Activated CD8-positive, alpha-beta T cell treated with anti-CD3 and anti-CD28 coated beads, Interleukin-2, amount 10 ng/mL, durations not matched to agents 7 days and 5 days (primary cell): ENCODE measurements at regions of chr19 and their contacts with region 1.

Region 1: GRCh38 chr19:13150187-13150930 is at the starts of genes IER2 and STX10:
- DNase-seq: peak; percentile 95
- ATAC-seq: peak; percentile 42
- H3K4me3 Mint-ChIP-seq: peak within 1 kb of the TSS; percentile 99
- H3K27ac Mint-ChIP-seq: peak within 1 kb of the TSS; percentile 99
- H3K4me1 Mint-ChIP-seq: peaks cover 20% of the 10 kb centered on the region
- H3K27me3 Mint-ChIP-seq: peaks cover 2% of the 10 kb centered on the region
- total RNA-seq, gene IER2: 203 to 210 TPM
- total RNA-seq, gene STX10: 68.4 to 69.2 TPM

Region 2: GRCh38 chr19:13104360-13104847 is 46.0 kb before region 1 on chr19:
- CTCF ChIA-PET with region 1: interaction called, 8 read pairs
- POLR2A ChIA-PET with region 1: interaction called, 21 read pairs
- DNase-seq: peak; percentile 75
- ATAC-seq: peak; percentile 55
- H3K4me3 Mint-ChIP-seq: peak overlapping the region; percentile 80
- H3K27ac Mint-ChIP-seq: peak overlapping the region; percentile 86
- H3K4me1 Mint-ChIP-seq: peaks cover 36% of the 10 kb centered on the region
- H3K27me3 Mint-ChIP-seq: no peaks in the 10 kb centered on the region

Region 3: GRCh38 chr19:13132471-13133180 is 17.7 kb before region 1 on chr19:
- CTCF ChIA-PET with region 1: interaction called, 11 read pairs
- POLR2A ChIA-PET with region 1: interaction called, 15 read pairs
- DNase-seq: peak; percentile 66
- ATAC-seq: peak; percentile 93
- H3K4me3 Mint-ChIP-seq: peak overlapping the region; percentile 19
- H3K27ac Mint-ChIP-seq: peak overlapping the region; percentile 75
- H3K4me1 Mint-ChIP-seq: peaks cover 34% of the 10 kb centered on the region
- H3K27me3 Mint-ChIP-seq: no peaks in the 10 kb centered on the region

Region 4: DNA sequence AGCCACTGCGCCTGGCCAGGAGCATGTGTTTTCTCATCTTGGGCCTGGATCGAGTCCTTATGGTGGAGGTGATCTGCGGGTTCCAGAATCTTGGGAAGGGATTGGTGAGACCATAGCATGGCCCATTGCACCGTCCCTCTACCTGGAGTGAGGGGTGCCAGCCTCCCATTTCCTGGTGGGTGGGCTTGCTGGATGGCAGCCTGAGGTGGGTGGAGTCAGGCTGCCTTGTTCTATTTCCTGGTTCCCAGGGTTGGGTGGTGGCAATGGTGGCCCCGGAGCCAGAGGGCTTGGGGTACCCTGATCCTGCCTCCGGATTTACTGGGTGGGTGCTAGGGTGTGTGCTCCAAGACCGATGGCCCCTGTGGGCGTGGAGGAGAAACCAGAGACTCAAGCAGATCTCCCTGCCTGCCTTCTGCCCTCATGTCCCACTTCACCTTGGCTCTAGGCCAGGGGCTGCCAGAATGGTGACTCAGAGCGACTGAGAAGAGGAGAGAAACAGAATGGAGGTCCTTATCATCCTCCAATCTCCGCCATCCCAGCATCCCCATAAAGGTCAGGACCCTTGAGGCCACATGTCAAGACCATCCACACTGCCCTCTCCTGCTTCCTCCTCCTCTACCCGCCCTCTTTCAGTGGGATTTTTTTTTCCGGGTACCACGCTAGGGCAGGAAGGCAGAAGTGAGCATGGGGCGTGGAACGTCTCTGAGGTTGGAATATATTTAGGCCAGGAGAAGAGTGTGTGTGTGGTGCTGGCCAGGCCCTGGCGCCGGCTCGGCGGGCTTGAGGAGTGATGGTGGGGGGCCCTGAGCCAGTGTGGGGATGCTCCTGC is 21.9 kb after region 1 on chr19:
- CTCF ChIA-PET with region 1: interaction called, 15 read pairs
- POLR2A ChIA-PET with region 1: interaction called, 183 read pairs
- DNase-seq: peak; percentile 73
- ATAC-seq: peak; percentile 14
- H3K4me3 Mint-ChIP-seq: peak overlapping the region; percentile 82
- H3K27ac Mint-ChIP-seq: peak overlapping the region; percentile 97
- H3K4me1 Mint-ChIP-seq: peaks cover 69% of the 10 kb centered on the region
- H3K27me3 Mint-ChIP-seq: no peaks in the 10 kb centered on the region

Region 5: GRCh38 chr19:13195678-13196077 is 45.3 kb after region 1 on chr19:
- CTCF ChIA-PET with region 1: interaction called, 26 read pairs
- POLR2A ChIA-PET with region 1: interaction called, 6 read pairs
- DNase-seq: peak; percentile 61
- ATAC-seq: peak; percentile 57
- H3K4me3 Mint-ChIP-seq: no peak overlapping the region
- H3K27ac Mint-ChIP-seq: no peak overlapping the region
- H3K4me1 Mint-ChIP-seq: peaks cover 29% of the 10 kb centered on the region
- H3K27me3 Mint-ChIP-seq: no peaks in the 10 kb centered on the region